OCI-LY7 (cell line): ENCODE measurements at regions of chr10 and their contacts with region 1.

Region 1: DNA sequence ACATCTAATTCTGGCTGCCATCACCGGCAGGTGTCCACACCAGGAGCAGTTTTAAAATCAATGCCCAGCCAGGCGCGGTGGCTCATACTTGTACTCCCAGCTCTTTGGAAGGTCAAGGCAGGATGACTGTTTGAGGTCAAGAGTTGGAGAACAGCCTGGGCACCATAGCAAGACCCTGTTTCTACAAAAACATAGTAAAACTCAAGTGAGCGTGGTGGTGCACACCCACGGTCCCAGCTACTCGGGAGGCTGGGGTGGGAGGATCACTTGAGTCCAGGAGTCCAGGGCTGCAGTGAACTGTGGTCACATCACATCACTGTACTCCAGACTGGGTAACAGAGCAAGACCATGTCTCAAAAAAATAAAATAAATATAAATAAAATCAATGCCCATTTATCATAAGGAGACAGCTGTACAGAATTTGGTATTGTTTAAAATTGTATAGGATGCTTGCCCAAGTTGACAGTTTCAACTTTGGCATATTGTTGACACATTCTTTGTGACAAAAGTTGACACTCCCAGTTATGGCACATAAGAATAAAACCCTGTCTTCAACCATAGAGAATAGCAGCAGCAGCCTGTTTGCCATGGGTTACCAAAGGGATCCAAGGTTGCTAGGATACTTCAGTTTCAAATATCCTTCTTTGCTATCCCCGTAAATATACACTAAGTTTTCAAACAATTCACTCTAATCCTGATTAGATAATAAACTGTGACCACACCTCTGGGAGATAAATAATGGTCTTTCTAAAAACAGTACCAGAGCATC is 193.0 kb downstream of the FAM107B start:
- DNase-seq: no peak
- H3K4me3 ChIP-seq: no peak overlapping the region
- H3K27ac ChIP-seq: no peak overlapping the region
- H3K4me1 ChIP-seq: peaks cover 82% of the 10 kb centered on the region
- CTCF ChIP-seq: no peak

Region 2: DNA sequence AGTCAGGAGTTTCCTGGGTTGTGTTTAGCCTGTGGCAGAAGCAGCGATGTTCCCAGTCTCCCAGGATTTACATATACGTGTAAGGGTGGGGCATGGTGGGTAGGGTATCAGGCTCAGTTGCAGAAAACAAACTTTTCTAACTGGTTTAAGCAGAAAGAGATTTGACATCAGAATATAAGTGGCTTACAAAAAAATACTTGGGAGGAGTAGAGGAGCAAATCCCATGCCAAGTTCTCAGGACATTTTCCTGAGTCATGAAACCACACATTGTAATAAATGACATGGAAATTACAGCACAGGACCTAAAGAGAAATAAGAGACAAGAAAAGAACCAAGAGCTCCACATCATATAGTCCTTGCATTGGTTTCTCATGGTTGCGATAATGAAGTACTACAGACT is 224.8 kb before region 1 on chr10:
- CTCF ChIA-PET with region 1: no interaction called
- POLR2A ChIA-PET with region 1: no interaction called
- intact Hi-C with region 1: no loop called
- DNase-seq: no peak
- H3K4me3 ChIP-seq: no peak overlapping the region
- H3K27ac ChIP-seq: no peak overlapping the region
- H3K4me1 ChIP-seq: no peaks in the 10 kb centered on the region
- CTCF ChIP-seq: no peak

Region 3: DNA sequence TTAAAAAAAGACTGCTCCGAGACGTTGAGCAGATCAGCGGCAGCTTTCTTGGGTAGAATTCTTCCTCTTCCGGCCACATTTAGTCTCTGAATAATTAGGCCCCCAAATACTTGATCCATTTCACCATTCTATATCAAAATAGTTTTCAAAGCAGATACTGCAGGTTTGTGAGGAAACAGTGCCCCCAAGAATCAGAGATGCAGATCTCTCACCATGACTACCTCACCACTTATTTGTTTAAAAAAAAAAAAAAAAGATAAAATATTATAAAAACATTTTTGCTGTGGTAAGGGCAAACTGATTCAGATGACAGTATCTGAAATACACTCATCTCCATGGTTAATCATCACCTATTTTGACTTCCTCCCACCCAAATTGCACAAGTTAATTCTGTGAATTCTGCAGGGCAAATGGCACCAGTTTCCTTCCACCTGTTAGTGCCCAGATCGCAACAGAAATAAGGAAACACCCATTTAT is 17.4 kb before region 1 on chr10:
- CTCF ChIA-PET with region 1: no interaction called
- POLR2A ChIA-PET with region 1: interaction called, 10 read pairs
- intact Hi-C with region 1: no loop called
- DNase-seq: no peak
- H3K4me3 ChIP-seq: peak overlapping the region; percentile 40
- H3K27ac ChIP-seq: peak overlapping the region; percentile 30
- H3K4me1 ChIP-seq: peaks cover 72% of the 10 kb centered on the region
- CTCF ChIP-seq: no peak